ENCODE measurements at regions of chr10 and their contacts with region 1.

Region 1: DNA sequence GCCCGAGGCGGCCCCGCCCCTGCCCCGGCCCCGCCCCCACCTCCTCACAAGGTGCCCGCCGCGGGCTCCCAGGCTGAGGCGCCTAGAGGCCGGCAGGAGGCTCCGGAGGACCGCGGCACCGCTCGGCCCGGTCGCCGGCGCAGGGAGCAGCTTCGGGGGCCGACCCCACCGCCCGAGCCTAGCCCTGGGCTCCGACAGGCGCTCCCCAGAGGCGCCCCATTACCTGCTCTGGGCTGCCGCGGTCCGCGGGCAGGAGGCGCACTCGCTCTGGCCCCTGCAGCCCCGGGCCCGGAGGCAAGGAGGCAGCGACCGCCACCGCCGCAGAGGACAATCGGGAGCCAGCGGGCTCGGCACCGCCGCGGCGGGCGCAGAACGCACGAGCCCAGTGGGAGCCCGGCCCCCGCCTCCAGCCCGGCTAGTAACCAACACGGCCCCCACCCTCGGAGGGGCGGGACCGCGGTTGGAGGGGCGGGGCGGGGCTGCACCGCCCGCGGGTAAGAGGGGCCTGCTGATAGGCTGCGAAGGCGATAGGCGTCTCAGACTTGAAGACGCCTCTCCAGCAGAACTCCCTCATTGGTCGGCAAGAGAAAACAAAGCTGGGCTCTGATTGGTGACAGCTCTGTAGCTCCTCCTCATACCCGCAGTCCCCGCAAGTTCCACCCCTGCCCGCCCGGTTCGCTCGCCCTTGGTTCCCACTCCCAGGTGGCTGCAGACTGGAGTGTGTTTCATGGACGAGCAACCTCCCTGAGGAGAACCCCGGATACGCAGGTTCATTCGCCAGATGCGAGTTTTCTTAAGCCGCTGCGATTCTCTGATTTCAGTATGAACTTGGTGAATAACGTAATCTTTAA is at the start of gene MPP7:
- DNase-seq: peak; percentile 98
- H3K4me3 ChIP-seq: peak within 1 kb of the TSS; percentile 77 to 96 (median 88)
- H3K27ac ChIP-seq: peak within 1 kb of the TSS; percentile 89 to 96 (median 94)
- H3K4me1 ChIP-seq: peaks cover 0 to 45% (median 20%) of the 10 kb centered on the region in 4 donors
- H3K27me3 ChIP-seq: no peaks in the 10 kb centered on the region
- CTCF ChIP-seq: peak in 2 of 4 experiments; percentile 34 to 69
- EP300 ChIP-seq: no peak
- POLR2A ChIP-seq: no peak
- total RNA-seq, gene MPP7: 29.7 to 50.3 (median 37.2) TPM

Region 2: GRCh38 chr10:28202941-28203352 is 99.9 kb before region 1 on chr10:
- intact Hi-C with region 1: no loop called
- DNase-seq: peak; percentile 77
- H3K4me3 ChIP-seq: peak overlapping the region in 3 of 4 donors; percentile 3 to 24 (median 18)
- H3K27ac ChIP-seq: peak overlapping the region; percentile 39 to 76 (median 58)
- H3K4me1 ChIP-seq: peaks cover 3 to 41% (median 32%) of the 10 kb centered on the region in 4 donors
- H3K27me3 ChIP-seq: no peaks in the 10 kb centered on the region
- CTCF ChIP-seq: no peak
- EP300 ChIP-seq: no peak
- POLR2A ChIP-seq: no peak

Region 3: DNA sequence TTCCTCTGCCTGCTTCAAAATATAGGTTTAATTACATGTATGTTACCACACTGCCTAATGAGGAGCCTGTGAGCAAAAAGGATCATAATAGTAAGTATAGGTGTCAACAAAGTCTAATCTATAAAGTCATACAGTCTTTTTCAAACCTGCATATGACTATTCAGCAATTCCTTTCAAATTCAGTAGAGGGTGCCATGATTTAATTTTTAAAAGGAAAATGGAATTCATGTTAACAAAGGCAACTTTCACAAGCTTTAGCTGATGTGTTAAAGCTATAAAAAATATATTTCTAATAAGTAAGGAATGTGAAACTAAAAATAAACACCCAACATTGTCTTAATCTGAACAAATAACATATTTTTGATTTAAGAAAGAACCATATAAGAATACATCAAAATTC is 52.1 kb before region 1 on chr10:
- intact Hi-C with region 1: loop called (anchors 2 kb)
- DNase-seq: no peak
- H3K4me3 ChIP-seq: no peak overlapping the region
- H3K27ac ChIP-seq: peak overlapping the region in 3 of 4 donors; percentile 11 to 76 (median 69)
- H3K4me1 ChIP-seq: peaks cover 0 to 52% (median 36%) of the 10 kb centered on the region in 4 donors
- H3K27me3 ChIP-seq: no peaks in the 10 kb centered on the region
- CTCF ChIP-seq: peak; percentile 31 to 62 (median 55)
- EP300 ChIP-seq: no peak
- POLR2A ChIP-seq: no peak

Region 4: DNA sequence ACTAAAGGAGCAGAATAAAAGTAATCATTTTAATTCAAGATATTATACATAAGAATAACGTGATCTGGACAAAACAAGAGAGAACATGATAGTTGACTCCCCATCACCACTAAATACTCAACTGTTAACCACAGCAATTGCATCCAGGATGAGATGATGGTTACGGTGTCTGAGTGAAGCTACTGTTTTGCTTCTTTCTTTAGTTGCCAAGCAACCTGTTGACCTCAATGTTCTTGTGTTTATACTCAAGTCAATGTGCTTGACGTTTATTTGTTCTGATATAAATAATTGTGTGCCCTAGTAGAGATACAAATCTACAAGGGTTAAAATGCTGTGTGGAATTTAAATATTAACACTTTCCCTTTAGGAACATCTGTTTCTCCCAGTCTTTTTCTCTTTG is 31.4 kb after region 1 on chr10:
- intact Hi-C with region 1: loop called (anchors 2 kb)
- DNase-seq: no peak
- H3K4me3 ChIP-seq: peak overlapping the region; percentile 24 to 51 (median 48)
- H3K27ac ChIP-seq: peak overlapping the region; percentile 79 to 90 (median 86)
- H3K4me1 ChIP-seq: peaks cover 0 to 42% (median 33%) of the 10 kb centered on the region in 4 donors
- H3K27me3 ChIP-seq: no peaks in the 10 kb centered on the region
- CTCF ChIP-seq: no peak
- EP300 ChIP-seq: peak in 3 of 4 donors; percentile 63 to 91 (median 82)
- POLR2A ChIP-seq: no peak

Region 5: DNA sequence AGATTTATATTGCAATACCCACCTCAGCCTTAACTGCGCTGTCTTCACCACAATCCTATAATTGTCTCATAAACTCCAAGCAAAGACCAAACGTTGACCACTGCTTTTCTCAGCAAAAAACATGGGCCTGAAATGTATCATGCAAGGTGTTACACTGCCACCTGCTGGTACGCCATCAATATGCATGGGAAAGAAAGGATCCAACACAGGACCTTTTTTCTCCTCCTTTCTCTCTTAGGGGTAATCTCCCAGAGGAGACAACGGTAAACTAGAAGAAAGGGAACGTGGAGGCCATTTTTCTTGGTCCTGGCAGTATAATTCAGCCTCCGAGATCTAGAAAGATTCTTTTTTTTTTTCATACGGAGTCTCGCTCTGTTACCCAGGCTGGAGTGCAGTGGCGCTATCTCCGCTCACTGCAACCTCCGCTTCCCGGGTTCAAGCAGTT is 79.1 kb after region 1 on chr10:
- intact Hi-C with region 1: loop called (anchors 1 kb)
- DNase-seq: peak; percentile 92
- H3K4me3 ChIP-seq: no peak overlapping the region
- H3K27ac ChIP-seq: peak overlapping the region in 1 of 4 donors; percentile 1
- H3K4me1 ChIP-seq: peaks cover 0 to 4% (median 1%) of the 10 kb centered on the region in 4 donors
- H3K27me3 ChIP-seq: no peaks in the 10 kb centered on the region
- CTCF ChIP-seq: peak; percentile 92 to 98 (median 96)
- EP300 ChIP-seq: no peak
- POLR2A ChIP-seq: no peak

Region 6: DNA sequence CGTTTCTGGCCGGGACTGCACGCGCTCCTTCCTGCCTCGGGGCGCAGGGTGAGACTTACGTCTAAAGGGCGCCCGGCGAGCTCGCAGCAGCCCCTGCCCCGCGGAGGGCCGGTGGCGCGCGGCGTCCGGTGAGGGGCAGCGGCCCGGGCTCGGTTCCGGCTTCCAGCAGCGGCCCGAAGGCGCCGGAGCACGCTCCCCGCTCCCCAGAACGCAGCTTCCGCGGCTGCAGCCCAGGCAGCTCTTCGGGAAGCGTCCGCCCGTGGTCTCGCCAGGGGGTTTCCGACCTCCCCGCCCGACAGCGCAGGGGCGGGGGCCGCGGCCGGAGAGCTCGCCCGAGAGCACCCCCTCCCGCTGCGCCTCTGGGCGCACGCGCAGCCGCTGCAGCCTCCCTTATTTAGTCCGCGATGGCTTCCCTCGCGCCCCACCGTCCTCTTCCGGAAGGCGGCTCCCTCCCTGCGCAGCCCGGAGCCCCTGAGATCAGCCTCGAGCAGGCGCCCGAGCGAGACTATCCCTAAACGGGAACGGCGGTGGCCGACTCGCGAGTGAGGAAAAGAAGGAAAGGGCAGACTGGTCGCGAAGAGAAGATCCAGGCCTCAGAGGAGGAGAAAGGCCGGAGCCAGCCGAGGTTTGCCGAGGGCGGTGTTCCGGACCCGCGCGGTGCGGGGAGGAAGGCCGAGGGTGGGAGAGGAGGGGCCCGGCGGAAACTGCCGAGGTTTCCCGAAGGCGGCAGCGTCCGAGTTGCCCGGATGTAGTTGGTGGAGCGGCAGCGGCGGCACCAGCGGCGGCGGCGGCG is 229.7 kb after region 1 on chr10 and contains the start of gene WAC:
- intact Hi-C with region 1: loop called (anchors 5 kb)
- DNase-seq: peak; percentile 97
- H3K4me3 ChIP-seq: peak within 1 kb of the TSS; percentile 89 to 99 (median 99)
- H3K27ac ChIP-seq: peak within 1 kb of the TSS; percentile 91 to 99 (median 98)
- H3K4me1 ChIP-seq: peaks cover 0 to 52% (median 38%) of the 10 kb centered on the region in 4 donors
- H3K27me3 ChIP-seq: no peaks in the 10 kb centered on the region
- CTCF ChIP-seq: peak in 2 of 4 experiments; percentile 8 to 20
- EP300 ChIP-seq: no peak
- POLR2A ChIP-seq: peak; percentile 62 to 79
- total RNA-seq, gene WAC: 132 to 180 (median 142) TPM